ENCODE measurements at regions of chr13 and their contacts with region 1.

Region 1: DNA sequence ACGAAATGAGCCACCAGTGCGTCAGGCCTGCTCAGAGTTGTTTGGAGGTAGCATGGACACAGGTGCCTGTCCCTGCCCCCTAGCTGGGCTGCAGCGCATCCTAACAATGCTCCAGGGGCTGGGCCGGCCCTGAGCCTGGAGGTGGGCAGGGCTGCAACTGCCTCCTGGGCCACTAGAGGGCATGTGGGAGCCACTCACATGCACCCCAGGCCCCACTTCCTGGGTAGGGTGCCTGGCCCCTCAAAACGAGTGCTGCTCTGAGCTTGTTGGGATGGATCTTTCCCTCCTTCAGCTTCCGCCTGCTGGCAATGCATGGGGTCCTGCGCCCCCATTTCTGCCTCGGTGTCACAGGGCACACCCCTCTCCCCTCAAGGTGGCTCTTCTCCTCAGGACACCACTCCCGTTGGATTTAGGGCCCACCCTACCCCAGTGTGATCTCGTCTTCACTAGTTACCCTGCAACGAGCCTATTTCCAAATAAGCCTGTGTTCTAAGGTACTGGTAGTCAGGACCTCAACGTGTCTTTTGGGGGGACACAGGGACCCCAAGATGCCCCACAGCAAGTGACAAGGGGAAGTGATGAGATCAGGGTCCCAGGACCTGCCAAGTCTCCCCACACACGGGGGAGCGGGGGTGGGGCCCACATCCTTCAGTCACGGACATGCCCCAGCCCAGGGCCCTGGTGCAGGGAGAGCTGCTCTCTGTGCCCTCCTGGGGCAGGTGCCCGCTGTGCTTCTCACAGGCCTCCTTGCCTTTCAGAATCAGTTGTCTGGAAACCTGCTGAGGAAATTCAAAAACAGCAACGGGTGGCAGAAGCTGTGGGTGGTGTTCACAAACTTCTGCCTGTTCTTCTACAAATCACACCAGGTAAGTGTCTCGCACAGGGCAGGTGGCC is 131.3 kb downstream of the STK24 start:
- DNase-seq: peak; percentile 49 to 71 (median 70)
- H3K4me3 ChIP-seq: no peak overlapping the region
- H3K4me3 Mint-ChIP-seq: peak overlapping the region in 1 of 2 donors; percentile 48
- H3K27ac ChIP-seq: peak overlapping the region in 1 of 2 donors; percentile 26
- H3K27ac Mint-ChIP-seq: peak overlapping the region in 4 of 7 donors; percentile 28 to 72 (median 64)
- H3K4me1 ChIP-seq: peaks cover 4 to 5% of the 10 kb centered on the region in 2 donors
- H3K4me1 Mint-ChIP-seq: peaks cover 6% of the 10 kb centered on the region
- H3K27me3 ChIP-seq: no peaks in the 10 kb centered on the region
- H3K27me3 Mint-ChIP-seq: peaks cover 0 to 5% (median 0%) of the 10 kb centered on the region in 3 donors
- CTCF ChIP-seq: peak; percentile 98

Region 2: GRCh38 chr13:98653463-98653985 is 207.9 kb after region 1 on chr13:
- intact Hi-C with region 1: loop called (anchors 5 kb)
- DNase-seq: peak; percentile 58 to 79 (median 77)
- H3K4me3 ChIP-seq: no peak overlapping the region
- H3K4me3 Mint-ChIP-seq: no peak overlapping the region
- H3K27ac ChIP-seq: no peak overlapping the region
- H3K27ac Mint-ChIP-seq: no peak overlapping the region
- H3K4me1 ChIP-seq: peaks cover 30% of the 10 kb centered on the region in 2 donors
- H3K4me1 Mint-ChIP-seq: peaks cover 32% of the 10 kb centered on the region
- H3K27me3 ChIP-seq: no peaks in the 10 kb centered on the region
- H3K27me3 Mint-ChIP-seq: peaks cover 6 to 10% (median 8%) of the 10 kb centered on the region in 3 donors
- CTCF ChIP-seq: peak; percentile 95

Region 3: DNA sequence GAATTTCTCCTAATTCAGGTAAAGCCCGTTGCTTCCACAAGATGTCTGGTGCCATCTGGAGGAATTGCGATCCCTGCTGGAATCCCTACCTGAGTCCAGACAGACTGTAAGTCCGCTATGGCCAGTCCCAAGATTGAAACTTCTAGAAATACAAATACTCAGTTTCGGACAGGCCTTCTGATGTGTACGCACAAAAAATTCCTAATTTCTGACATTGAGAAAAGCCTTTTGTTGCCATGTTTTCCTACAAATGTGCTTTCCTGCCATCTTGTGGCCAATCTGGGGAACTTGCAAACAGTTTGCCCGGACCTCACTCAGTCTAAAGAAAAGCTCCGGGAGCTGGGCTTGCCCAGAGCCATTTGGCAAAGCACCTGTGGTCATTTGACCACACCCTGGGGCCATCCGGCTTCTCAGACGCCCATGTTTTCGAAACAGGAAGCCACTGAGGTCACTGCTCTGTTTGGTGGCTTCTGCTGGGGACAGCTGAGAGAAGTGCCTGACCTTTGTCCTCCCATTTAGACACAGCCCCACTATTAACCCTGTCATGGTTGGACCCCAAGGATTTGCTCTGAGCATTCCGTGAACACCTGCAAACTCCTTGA is 227.5 kb after region 1 on chr13:
- intact Hi-C with region 1: loop called (anchors 2 to 5 kb)
- DNase-seq: peak; percentile 39 to 75 (median 73)
- H3K4me3 ChIP-seq: no peak overlapping the region
- H3K4me3 Mint-ChIP-seq: no peak overlapping the region
- H3K27ac ChIP-seq: no peak overlapping the region
- H3K27ac Mint-ChIP-seq: peak overlapping the region in 2 of 7 donors; percentile 22 to 23
- H3K4me1 ChIP-seq: peaks cover 7 to 9% of the 10 kb centered on the region in 2 donors
- H3K4me1 Mint-ChIP-seq: peaks cover 15% of the 10 kb centered on the region
- H3K27me3 ChIP-seq: no peaks in the 10 kb centered on the region
- H3K27me3 Mint-ChIP-seq: peaks cover 3 to 17% (median 14%) of the 10 kb centered on the region in 3 donors
- CTCF ChIP-seq: peak; percentile 89

Region 4: DNA sequence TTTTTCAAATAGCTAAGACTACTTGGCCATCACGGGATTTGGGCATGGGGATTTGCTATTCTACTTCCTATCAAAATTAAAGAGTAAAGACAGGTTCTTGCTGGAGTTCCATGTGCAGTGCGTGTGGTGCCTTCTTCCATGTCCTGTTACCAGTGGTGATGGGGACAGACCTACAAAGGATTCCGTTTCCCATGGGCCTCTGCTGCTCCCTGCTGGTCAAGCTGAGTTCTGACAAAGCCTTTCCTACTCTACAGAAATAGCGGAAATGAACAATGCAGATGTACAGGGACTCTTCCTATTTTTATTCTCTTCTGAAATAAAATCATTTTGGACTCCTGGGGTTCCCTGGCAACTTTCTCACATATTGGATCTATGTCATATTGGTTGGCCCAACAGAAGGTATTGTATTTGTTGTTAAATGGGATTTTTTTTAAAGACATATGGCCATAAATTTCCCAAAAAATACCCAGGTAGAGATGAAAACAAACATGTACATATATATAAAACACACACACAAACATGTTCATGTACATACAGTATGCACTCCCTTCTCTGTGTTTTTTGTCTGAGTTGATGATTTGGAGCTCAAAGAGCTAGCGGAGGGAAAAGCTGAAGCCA is 397.4 kb after region 1 on chr13:
- intact Hi-C with region 1: loop called in 1 of 2 experiments (anchors 10 kb)
- DNase-seq: peak; percentile 51 to 66 (median 66)
- H3K4me3 ChIP-seq: no peak overlapping the region
- H3K4me3 Mint-ChIP-seq: no peak overlapping the region
- H3K27ac ChIP-seq: no peak overlapping the region
- H3K27ac Mint-ChIP-seq: no peak overlapping the region
- H3K4me1 ChIP-seq: no peaks in the 10 kb centered on the region
- H3K4me1 Mint-ChIP-seq: no peaks in the 10 kb centered on the region
- H3K27me3 ChIP-seq: peaks cover 6 to 13% of the 10 kb centered on the region in 2 donors
- H3K27me3 Mint-ChIP-seq: peaks cover 7 to 27% (median 12%) of the 10 kb centered on the region in 3 donors
- CTCF ChIP-seq: peak; percentile 85